Right ventricle myocardium inferior (tissue), 1 donor: ENCODE measurements at regions of chr5 and their contacts with region 1.

Region 1: DNA sequence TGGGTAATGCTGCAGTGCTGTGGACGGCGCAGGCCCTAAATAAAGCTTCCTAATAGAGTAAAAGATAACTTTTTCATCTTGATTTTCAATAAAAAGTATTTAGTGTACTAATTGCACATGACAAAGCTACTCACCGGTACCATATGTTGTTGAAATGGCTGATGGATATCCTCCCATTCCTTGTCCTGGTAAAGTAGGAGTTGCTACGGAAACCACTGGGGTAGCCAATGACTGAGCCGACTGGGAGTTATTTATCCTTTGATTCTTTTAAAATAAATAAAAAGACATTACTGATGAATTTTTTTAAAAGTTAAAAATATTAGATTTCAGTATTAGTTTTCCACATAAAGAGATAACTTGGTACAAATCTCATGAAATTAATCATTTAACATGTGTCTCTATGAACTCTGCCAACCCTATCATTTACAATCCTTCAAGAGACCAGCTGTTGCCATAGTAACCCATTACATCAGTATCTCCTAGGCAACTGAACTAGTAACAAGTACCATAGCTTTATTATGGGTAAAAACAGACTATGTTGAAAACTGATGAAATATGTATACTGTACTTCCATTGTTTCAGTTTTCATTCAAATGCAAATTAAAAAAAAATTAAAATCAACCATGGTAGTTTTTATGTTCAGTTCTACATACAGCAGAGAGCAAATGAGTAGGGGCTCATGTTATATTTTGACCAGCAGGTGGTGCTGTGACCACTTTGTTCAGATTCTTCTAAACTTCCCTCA is 153.7 kb downstream of the MEF2C start:
- DNase-seq: no peak
- ATAC-seq: peak; percentile 75

Region 2: DNA sequence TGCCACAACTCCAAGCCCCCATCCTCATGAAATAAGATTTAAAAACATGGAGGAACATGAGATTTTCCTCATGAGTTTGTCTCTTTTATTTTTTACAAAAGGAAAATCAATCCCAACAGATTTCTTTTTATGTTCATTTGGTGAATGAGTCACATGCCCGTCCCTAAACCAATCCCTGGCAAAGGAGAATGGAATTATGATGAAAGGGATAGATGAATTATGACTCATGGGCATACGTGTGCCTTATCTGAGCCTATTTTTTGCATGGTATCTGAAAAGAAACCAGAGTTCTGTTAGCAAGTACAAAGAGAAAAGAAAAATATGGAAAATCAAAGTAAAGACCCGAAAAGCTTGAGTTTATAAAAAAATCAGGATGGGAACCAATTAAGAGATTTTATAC is 193.1 kb before region 1 on chr5:
- intact Hi-C with region 1: no loop called
- DNase-seq: no peak
- ATAC-seq: no peak

Region 3: GRCh38 chr5:88746438-88746882 is 17.2 kb after region 1 on chr5:
- intact Hi-C with region 1: no loop called
- DNase-seq: no peak
- ATAC-seq: no peak

Region 4: DNA sequence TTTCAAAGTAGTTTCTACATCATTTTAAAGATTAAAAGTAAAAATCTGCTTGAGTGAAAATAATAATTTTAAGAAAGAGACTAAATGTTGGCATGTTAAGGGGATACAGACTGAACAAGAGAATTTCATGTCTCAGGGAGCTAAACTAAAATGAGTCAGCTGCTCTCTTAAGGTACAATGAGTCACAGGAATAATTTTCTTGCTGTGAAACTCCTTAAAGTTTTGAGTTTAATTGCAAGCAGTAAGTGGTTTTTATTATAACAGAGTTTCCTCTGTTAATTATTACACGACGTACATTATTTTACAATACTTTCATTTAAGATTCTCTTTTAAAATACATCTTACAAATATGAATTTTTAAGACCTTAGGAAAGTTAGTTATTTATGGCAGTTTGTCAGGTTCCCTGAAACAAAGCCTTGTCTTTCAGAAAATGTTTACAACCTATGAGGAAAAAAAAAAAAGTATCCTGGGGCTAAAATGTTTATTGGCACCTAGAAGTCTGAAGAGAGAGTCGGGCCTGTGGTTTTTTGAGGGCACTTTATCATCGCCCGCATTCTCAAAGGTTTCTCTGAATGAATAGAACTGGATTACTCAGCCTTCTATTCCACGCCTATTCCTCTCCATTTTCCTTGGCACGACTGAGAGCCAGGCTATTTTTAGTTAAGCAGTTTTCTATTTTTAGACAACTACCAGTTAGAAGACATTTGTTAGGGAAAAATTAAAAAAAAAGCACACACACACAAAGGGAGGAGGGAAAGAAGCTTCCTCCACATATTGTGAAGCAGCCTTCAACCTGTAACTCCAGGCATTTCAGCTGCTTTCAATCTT is 56.3 kb after region 1 on chr5:
- intact Hi-C with region 1: loop called (anchors 5 kb)
- DNase-seq: no peak
- ATAC-seq: peak; percentile 91

Region 5: DNA sequence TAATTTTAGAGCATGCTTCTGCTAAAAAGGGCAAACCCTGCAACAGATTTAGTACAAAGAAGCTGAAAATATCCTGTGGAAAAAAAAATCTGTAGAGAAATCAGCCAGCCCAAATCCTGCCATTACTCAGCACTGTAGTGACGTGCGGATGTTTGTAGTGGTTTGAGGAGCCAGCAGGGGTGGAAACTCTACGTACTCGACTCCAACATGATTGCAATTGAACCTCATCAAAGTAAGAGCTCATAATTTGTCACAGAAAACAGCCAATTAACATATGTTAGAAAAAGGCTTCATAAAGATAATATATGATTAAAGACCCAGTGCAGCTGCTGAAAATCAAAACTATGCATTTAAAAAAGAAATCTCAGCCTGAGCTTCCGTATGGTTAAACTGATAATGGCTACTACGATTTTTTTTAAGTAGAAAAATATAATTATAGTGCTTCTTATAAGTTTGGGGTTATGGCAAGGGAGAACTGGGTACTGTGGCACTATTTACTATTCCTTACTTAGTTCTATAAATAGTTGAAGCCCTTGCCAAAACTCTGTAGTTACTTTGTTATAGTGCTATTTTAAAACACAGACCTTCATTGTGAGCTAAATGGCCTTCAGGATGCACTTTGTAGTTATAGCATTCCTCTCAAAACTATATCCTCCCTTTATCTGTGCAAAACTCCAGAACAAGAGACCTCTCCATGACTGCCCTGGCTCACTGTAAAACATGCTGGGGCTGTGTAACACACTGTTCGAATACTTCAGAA is 104.3 kb after region 1 on chr5:
- intact Hi-C with region 1: loop called (anchors 5 kb)
- DNase-seq: no peak
- ATAC-seq: peak; percentile 62

Region 6: DNA sequence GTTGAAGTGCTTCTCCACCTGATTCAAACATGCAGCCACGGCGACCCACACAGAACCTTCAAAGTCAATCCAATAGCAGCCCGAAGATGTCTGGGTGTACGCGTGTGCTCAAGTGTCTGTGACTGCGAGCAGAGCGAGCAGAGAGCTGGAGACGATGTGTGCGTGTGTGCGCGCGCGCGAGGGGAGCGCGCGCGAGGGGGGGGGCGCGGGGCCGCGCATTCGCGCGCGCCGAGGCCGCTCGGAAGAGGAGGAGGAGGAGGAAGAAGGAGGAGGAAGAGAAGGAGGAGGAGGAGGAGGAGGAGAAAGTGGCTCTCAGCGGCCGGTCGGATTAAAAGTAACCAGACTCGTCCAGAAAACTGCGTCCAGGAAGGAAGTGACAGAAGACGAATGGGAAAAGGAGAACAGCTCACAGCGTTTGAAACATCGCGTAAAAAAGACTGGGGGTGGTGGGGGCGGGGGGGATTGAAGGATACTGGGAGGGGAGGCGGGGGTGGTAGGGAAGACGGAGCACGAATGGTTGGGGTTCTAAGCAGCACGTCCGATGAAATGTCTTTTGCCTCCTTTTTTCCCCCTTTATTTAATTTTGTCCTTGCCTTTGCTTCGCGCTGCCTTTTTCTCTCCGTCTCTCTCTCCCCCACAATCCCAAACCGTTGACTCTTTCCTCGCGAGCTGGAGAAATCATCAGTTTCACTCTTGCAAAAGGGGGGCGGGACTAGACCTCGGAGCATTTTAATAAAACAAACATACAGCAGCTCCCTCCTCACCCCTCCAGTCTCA is 154.0 kb after region 1 on chr5 and contains the start of gene MEF2C:
- intact Hi-C with region 1: loop called (anchors 2 kb)
- DNase-seq: peak; percentile 86
- ATAC-seq: peak; percentile 85
- total RNA-seq, gene MEF2C: 46.7 TPM

Region 7: DNA sequence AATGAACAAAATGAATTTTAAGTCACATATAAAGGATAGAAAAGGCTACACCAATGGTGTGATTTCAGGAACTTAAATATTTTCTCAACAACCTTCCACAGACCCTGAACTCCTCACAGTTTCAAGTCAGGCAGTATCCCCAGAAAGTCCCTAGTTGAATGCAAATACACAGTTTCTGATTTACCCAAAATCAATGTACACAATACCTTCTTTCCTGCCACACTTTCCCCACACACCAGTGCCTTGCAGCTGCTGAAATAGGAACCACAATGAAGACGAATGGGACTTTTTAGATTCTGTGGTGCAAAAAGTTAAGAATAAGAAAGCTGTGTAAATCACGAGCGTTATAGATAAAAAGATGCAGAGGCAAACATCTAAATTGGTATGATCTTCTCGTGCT is 706.1 kb after region 1 on chr5:
- intact Hi-C with region 1: loop called (anchors 10 kb)
- DNase-seq: no peak
- ATAC-seq: no peak

Region 8: GRCh38 chr5:90264689-90265544 is 1535.7 kb after region 1 on chr5:
- intact Hi-C with region 1: loop called (anchors 5 kb)
- DNase-seq: no peak
- ATAC-seq: no peak